ENCODE measurements at regions of chr19 and their contacts with region 1.

Region 1: DNA sequence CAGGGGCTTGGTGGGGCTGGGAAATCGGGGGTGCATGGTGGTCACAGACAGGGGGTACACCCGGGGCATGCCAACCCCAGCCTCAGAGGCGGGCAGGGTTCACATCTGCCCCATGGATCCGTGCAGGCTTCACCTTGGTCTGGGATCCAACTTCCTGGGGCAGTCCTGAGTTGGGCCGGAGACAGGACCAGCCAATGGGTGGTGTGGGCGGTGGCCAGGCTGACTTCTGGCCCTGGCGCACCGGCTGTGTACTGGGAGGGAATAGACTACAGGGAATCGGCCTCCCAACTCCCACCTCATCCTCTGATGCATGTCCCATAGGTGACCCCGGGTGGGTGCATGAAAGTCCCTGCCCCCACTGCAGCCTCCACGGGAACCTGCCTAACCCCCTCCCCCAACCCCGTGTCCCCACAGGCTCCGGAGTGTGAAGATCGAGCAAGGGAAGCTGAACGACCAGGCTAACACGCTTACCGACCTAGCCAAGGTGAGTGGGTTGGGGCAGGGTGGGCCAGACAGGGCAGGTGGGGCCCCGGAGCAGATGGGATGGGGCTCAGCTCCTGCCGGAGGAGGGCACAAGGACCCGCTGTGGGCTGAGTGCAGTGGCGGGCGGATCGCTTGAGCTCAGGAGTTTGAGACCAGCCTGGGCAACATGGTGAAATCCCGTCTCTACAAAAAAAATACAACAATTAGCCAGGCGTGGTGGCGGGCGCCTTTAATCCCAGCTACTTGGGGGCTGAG is 14.7 kb upstream of the ARRDC2 start:
- DNase-seq: no peak
- ATAC-seq: no peak
- H3K4me3 Mint-ChIP-seq: no peak overlapping the region
- H3K27ac Mint-ChIP-seq: no peak overlapping the region
- H3K4me1 Mint-ChIP-seq: peaks cover 8% of the 10 kb centered on the region
- H3K27me3 Mint-ChIP-seq: no peaks in the 10 kb centered on the region

Region 2: GRCh38 chr19:17953869-17954268 is 39.4 kb before region 1 on chr19:
- CTCF ChIA-PET with region 1: interaction called, 10 read pairs
- POLR2A ChIA-PET with region 1: no interaction called
- intact Hi-C with region 1: no loop called
- DNase-seq: no peak
- ATAC-seq: no peak
- H3K4me3 Mint-ChIP-seq: no peak overlapping the region
- H3K27ac Mint-ChIP-seq: no peak overlapping the region
- H3K4me1 Mint-ChIP-seq: peaks cover 33% of the 10 kb centered on the region
- H3K27me3 Mint-ChIP-seq: peaks cover 54% of the 10 kb centered on the region